ENCODE measurements at regions of chr2 and their contacts with region 1.

Region 1: GRCh38 chr2:197399887-197400540 is 34.8 kb downstream of the SF3B1 start:
- DNase-seq: no peak
- H3K4me3 ChIP-seq: no peak overlapping the region
- H3K27ac ChIP-seq: no peak overlapping the region
- H3K4me1 ChIP-seq: no peaks in the 10 kb centered on the region
- H3K27me3 ChIP-seq: no peaks in the 10 kb centered on the region
- CTCF ChIP-seq: no peak
- EP300 ChIP-seq: no peak
- POLR2A ChIP-seq: no peak

Region 2: DNA sequence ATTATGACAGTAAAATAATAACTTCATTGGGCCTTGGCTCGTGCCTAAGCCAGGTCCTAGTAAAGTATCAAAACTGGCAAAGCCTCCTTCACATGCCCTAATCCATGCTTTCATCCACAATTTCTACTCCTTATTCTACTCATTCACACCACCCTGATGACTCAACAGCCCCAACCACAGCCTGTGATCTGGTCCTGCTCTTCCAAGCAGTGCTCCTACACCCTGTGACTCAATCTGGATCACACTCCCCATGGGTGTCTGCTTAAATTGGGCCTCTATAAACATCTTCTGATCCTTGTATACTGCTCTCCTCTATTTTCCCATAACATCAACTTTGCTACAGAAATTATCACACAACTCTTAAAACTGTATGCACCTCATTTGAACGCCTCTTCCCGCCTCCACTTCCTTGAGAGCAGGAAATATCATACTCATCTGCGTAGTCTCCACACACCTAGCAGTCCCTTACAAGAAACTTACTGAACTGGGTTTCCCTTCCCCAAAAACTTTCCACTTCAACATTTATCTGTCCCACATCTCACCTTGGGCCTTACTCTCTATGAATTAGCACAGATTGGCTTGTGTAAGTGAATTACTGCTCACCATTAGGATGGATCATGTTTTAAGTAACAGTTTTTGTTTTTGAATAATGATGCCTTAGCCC is 616.5 kb before region 1 on chr2:
- intact Hi-C with region 1: loop called (anchors 10 kb)
- DNase-seq: no peak
- H3K4me3 ChIP-seq: no peak overlapping the region
- H3K27ac ChIP-seq: no peak overlapping the region
- H3K4me1 ChIP-seq: no peaks in the 10 kb centered on the region
- H3K27me3 ChIP-seq: no peaks in the 10 kb centered on the region
- CTCF ChIP-seq: no peak
- EP300 ChIP-seq: no peak
- POLR2A ChIP-seq: no peak

Measured in esophagus muscularis mucosa (tissue), 4 donors.